ENCODE measurements at regions of chr7 and their contacts with region 1.

Region 1: DNA sequence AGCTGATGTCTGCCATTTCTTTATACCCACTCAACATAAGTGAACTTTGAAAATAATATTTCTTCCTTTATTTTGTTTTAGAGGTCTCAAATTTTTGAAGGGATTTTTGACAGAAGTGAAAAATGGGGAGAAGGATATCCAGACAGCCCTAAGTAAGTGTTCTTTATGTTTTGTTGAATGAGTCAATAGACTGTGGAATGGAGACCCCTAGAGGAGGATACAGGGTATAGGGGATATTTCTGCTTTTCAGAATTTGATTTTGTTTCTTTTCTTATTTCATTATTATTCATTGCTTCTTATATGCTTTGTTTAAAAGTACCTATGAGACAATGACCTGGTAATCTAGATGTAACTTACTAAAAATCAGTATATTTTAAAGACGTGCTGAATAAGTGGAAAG is 34.4 kb downstream of the PLEKHA8 start:
- DNase-seq: no peak
- ATAC-seq: peak; percentile 62
- H3K4me3 Mint-ChIP-seq: no peak overlapping the region
- H3K27ac Mint-ChIP-seq: no peak overlapping the region
- H3K4me1 Mint-ChIP-seq: peaks cover 8% of the 10 kb centered on the region
- H3K27me3 Mint-ChIP-seq: no peaks in the 10 kb centered on the region

Region 2: GRCh38 chr7:29878081-29878688 is 184.4 kb before region 1 on chr7:
- CTCF ChIA-PET with region 1: interaction called, 27 read pairs
- POLR2A ChIA-PET with region 1: no interaction called
- DNase-seq: peak; percentile 34
- ATAC-seq: peak; percentile 33
- H3K4me3 Mint-ChIP-seq: no peak overlapping the region
- H3K27ac Mint-ChIP-seq: no peak overlapping the region
- H3K4me1 Mint-ChIP-seq: no peaks in the 10 kb centered on the region
- H3K27me3 Mint-ChIP-seq: peaks cover 22% of the 10 kb centered on the region

Region 3: GRCh38 chr7:29929018-29929807 is 133.4 kb before region 1 on chr7:
- CTCF ChIA-PET with region 1: no interaction called
- POLR2A ChIA-PET with region 1: no interaction called
- DNase-seq: no peak
- ATAC-seq: no peak
- H3K4me3 Mint-ChIP-seq: no peak overlapping the region
- H3K27ac Mint-ChIP-seq: no peak overlapping the region
- H3K4me1 Mint-ChIP-seq: peaks cover 2% of the 10 kb centered on the region
- H3K27me3 Mint-ChIP-seq: no peaks in the 10 kb centered on the region

Region 4: DNA sequence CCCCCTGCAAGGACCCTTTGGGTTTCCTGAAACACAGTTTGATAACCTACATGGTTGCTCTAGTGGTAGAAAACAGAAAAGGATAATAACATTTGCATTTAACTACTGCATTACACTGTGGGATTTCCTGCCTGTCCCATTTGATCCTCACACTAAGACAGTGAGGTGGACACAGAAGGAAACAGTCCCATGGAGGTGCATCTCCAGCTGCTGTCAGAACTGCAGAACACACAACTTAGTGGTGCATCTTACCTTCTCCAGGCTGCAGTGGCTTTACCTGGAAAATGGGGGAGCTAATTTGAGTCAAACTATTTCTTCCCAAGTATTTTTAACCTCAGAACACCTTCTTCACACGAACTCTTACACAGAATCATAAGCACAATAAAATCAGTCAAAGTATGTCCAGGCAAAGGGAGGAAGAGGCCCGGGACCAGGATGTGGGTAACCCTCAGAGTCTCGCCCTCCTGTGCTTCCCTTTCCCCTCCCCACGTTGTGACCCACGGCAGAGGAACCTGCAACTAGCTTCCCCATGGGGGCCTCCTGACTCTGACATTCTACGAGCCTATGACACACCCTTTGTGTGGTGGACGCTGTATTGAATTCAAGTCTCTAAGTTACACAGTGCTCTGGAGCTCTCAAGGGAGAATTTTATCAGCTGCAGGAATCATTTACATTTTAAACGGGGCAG is 106.6 kb before region 1 on chr7:
- CTCF ChIA-PET with region 1: interaction called, 30 read pairs
- POLR2A ChIA-PET with region 1: no interaction called
- DNase-seq: peak; percentile 67
- ATAC-seq: peak; percentile 85
- H3K4me3 Mint-ChIP-seq: peak overlapping the region; percentile 63
- H3K27ac Mint-ChIP-seq: peak overlapping the region; percentile 78
- H3K4me1 Mint-ChIP-seq: peaks cover 51% of the 10 kb centered on the region
- H3K27me3 Mint-ChIP-seq: no peaks in the 10 kb centered on the region

Region 5: GRCh38 chr7:30038182-30038980 is 24.2 kb before region 1 on chr7:
- CTCF ChIA-PET with region 1: interaction called, 33 read pairs
- POLR2A ChIA-PET with region 1: no interaction called
- DNase-seq: no peak
- ATAC-seq: no peak
- H3K4me3 Mint-ChIP-seq: no peak overlapping the region
- H3K27ac Mint-ChIP-seq: no peak overlapping the region
- H3K4me1 Mint-ChIP-seq: peaks cover 16% of the 10 kb centered on the region
- H3K27me3 Mint-ChIP-seq: no peaks in the 10 kb centered on the region

Region 6: GRCh38 chr7:30074422-30075030 is 11.9 kb after region 1 on chr7:
- CTCF ChIA-PET with region 1: interaction called, 28 read pairs
- POLR2A ChIA-PET with region 1: interaction called, 3 read pairs
- DNase-seq: no peak
- ATAC-seq: no peak
- H3K4me3 Mint-ChIP-seq: no peak overlapping the region
- H3K27ac Mint-ChIP-seq: no peak overlapping the region
- H3K4me1 Mint-ChIP-seq: no peaks in the 10 kb centered on the region
- H3K27me3 Mint-ChIP-seq: no peaks in the 10 kb centered on the region

Region 7: GRCh38 chr7:30134611-30135545 is 72.3 kb after region 1 on chr7 and contains the start of gene MTURN:
- CTCF ChIA-PET with region 1: interaction called, 12 read pairs
- POLR2A ChIA-PET with region 1: no interaction called
- DNase-seq: peak; percentile 86
- ATAC-seq: peak; percentile 90
- H3K4me3 Mint-ChIP-seq: peak within 1 kb of the TSS; percentile 79
- H3K27ac Mint-ChIP-seq: peak within 1 kb of the TSS; percentile 62
- H3K4me1 Mint-ChIP-seq: peaks cover 10% of the 10 kb centered on the region
- H3K27me3 Mint-ChIP-seq: peaks cover 46% of the 10 kb centered on the region
- total RNA-seq, gene MTURN: 1.1 to 1.3 TPM

Measured in activated CD8-positive, alpha-beta T cell treated with anti-CD3 and anti-CD28 coated beads, Interleukin-2, amount 10 ng/mL, durations not matched to agents 7 days and 5 days (primary cell).